ENCODE measurements at regions of chr7 and their contacts with region 1.

Region 1: GRCh38 chr7:108535257-108535656 is 9.3 kb upstream of the PNPLA8 start:
- DNase-seq: no peak
- ATAC-seq: no peak
- H3K4me3 ChIP-seq: no peak overlapping the region
- H3K4me3 Mint-ChIP-seq: no peak overlapping the region
- H3K27ac ChIP-seq: no peak overlapping the region
- H3K27ac Mint-ChIP-seq: no peak overlapping the region
- H3K4me1 ChIP-seq: no peaks in the 10 kb centered on the region
- H3K4me1 Mint-ChIP-seq: no peaks in the 10 kb centered on the region
- H3K27me3 ChIP-seq: no peaks in the 10 kb centered on the region
- H3K27me3 Mint-ChIP-seq: peaks cover 10 to 13% of the 10 kb centered on the region in 2 donors

Region 2: DNA sequence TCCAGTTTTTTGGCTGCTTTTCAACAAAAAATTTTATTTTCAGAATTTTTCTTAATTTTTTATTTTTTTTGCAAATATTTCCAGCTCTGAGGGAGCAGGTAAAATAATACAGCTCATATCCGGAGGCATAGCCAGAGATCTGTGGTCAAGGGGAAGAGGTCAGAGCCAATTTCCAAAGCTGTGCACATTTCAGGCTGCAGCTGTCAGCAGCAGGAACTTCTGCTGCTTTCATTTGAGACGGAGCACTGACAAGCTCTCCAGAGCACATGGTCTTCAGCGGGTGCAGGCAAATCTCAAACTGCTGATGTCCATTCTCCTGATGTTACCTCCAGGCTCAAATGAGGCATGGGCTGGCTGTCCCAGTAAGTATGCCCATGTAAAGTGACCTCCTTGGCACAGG is 843.5 kb before region 1 on chr7:
- CTCF ChIA-PET with region 1: no interaction called
- POLR2A ChIA-PET with region 1: interaction called in 1 of 2 experiments, 10 read pairs
- DNase-seq: no peak
- ATAC-seq: no peak
- H3K4me3 ChIP-seq: no peak overlapping the region
- H3K4me3 Mint-ChIP-seq: no peak overlapping the region
- H3K27ac ChIP-seq: no peak overlapping the region
- H3K27ac Mint-ChIP-seq: no peak overlapping the region
- H3K4me1 ChIP-seq: no peaks in the 10 kb centered on the region
- H3K4me1 Mint-ChIP-seq: no peaks in the 10 kb centered on the region
- H3K27me3 ChIP-seq: peaks cover 0 to 3% of the 10 kb centered on the region in 2 experiments
- H3K27me3 Mint-ChIP-seq: peaks cover 10 to 11% of the 10 kb centered on the region in 2 donors

Region 3: DNA sequence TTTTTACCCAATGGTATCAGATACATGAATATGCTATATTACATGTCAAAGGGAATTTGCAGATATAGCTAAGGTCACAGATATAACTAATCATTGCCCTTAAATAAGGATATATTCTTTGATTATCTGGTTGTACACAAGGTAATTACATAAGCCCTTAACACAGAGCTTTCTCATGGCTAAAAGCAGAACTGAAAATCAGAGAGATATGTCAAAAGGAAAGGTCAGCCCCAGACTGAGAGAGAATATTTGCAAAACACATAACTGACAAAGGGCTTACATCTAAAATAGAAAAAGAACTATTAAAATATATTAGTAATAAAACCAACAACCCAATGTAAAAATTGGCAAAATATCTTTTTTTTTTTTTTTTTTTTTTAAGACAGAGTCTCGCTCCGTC is 1526.1 kb after region 1 on chr7:
- CTCF ChIA-PET with region 1: no interaction called
- POLR2A ChIA-PET with region 1: interaction called in 1 of 2 experiments, 14 read pairs
- DNase-seq: no peak
- ATAC-seq: no peak
- H3K4me3 ChIP-seq: no peak overlapping the region
- H3K4me3 Mint-ChIP-seq: no peak overlapping the region
- H3K27ac ChIP-seq: no peak overlapping the region
- H3K27ac Mint-ChIP-seq: no peak overlapping the region
- H3K4me1 ChIP-seq: no peaks in the 10 kb centered on the region
- H3K4me1 Mint-ChIP-seq: no peaks in the 10 kb centered on the region
- H3K27me3 ChIP-seq: no peaks in the 10 kb centered on the region
- H3K27me3 Mint-ChIP-seq: no peaks in the 10 kb centered on the region